PC-3 (cell line): ENCODE measurements at regions of chr2 and their contacts with region 1.

Region 1: GRCh38 chr2:227479865-227480475 is 8.0 kb downstream of the AGFG1 start:
- DNase-seq: peak; percentile 56
- ATAC-seq: peak; percentile 77
- H3K4me3 ChIP-seq: no peak overlapping the region
- H3K27ac ChIP-seq: no peak overlapping the region
- H3K4me1 ChIP-seq: peaks cover 47% of the 10 kb centered on the region
- H3K27me3 ChIP-seq: no peaks in the 10 kb centered on the region
- CTCF ChIP-seq: peak; percentile 57

Region 2: DNA sequence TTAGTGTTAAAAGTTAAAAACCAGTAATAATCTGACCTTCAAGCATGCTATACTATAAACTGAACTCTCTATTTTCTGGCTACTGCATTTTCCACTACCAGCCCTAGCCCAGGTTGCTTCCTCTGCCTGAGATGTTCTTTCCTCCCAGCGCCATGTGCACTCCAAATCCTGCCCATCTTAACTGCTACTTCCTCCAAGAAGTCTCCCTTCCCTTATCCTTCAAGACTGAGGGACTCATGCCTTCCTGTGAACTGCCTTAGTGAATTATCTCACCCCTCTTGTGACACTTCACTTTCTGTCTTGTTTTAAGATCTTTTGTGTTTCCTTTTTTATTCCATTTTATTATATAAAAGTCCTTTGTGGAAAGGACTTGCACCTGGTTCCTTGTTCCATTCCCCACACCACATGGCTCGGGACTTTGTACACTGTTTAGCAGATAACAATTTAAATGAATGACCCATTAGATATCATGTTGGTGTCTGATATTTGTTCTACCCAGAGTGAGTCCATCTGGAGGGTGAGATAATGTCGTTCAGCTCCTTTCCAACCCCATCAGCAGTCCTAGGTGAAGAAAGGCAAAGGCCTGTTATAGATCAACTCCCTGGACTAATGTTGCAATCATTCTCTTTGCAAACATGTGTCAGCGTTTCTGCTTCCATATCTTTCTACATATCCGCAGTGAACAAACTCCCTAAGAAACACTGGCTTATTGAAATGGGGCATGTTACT is 28.9 kb before region 1 on chr2:
- CTCF ChIA-PET with region 1: no interaction called
- POLR2A ChIA-PET with region 1: no interaction called
- intact Hi-C with region 1: no loop called
- DNase-seq: no peak
- ATAC-seq: no peak
- H3K4me3 ChIP-seq: no peak overlapping the region
- H3K27ac ChIP-seq: no peak overlapping the region
- H3K4me1 ChIP-seq: no peaks in the 10 kb centered on the region
- H3K27me3 ChIP-seq: no peaks in the 10 kb centered on the region
- CTCF ChIP-seq: no peak

Region 3: DNA sequence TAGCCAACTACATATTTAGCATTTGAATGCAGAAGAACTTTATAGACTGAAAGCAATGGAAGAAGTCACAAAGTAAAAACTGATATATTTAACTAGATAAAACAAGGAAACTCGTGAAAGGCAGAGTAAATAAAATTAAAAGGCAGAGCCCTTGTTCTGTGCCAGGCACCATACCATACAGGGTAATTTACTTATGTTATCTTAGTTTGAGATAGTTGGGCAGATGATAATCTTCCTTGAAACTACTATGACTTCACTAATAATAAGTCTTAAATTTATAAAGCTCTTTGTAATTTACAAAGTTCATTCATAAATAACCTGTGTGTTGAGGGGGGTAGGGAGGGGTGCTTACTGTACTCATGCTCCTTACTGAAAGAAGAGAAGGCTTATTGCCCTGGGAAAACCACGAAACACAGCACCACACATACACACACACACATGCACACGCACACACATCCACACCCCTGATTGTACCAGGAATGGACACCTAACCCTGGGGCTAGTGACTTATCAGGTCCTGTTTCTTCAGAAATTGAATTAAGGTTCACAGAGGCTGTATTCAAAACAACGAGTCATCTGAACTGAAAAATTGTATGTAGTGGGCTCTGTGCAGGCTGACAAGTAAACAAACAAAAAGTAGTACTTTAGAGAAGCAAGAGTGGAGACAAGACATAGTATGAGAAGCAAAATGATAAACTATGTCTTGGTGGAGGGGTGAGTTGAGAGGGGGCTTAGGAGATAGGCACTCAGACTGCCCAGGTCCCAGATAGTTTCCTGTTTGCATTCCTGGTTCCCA is 30.1 kb after region 1 on chr2:
- CTCF ChIA-PET with region 1: no interaction called
- POLR2A ChIA-PET with region 1: no interaction called
- intact Hi-C with region 1: no loop called
- DNase-seq: peak; percentile 76
- ATAC-seq: peak; percentile 74
- H3K4me3 ChIP-seq: no peak overlapping the region
- H3K27ac ChIP-seq: peak overlapping the region; percentile 20
- H3K4me1 ChIP-seq: peaks cover 32% of the 10 kb centered on the region
- H3K27me3 ChIP-seq: no peaks in the 10 kb centered on the region
- CTCF ChIP-seq: no peak

Region 4: DNA sequence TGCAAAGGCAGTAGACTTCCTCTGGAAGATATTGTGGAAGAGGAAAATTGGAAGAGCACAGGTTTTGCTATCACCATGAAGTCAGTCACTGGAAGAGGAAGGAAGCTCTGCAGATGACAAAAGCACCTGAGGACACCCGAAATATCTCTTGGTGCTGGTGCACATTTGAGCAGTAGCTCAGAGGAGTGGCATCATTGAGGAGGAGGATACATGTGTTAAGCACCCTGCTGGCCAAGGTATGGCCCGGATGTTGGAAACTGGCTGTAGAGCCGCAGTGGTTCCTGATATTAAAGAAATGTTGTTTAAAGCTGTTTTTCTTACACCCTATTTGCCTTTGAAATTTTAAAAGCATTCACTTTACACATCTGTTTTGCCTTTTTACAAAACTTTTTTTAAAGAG is 86.0 kb after region 1 on chr2:
- CTCF ChIA-PET with region 1: no interaction called
- POLR2A ChIA-PET with region 1: no interaction called
- intact Hi-C with region 1: loop called (anchors 5 kb)
- DNase-seq: no peak
- ATAC-seq: no peak
- H3K4me3 ChIP-seq: no peak overlapping the region
- H3K27ac ChIP-seq: no peak overlapping the region
- H3K4me1 ChIP-seq: no peaks in the 10 kb centered on the region
- H3K27me3 ChIP-seq: no peaks in the 10 kb centered on the region
- CTCF ChIP-seq: no peak

Region 5: GRCh38 chr2:227578651-227579050 is 98.7 kb after region 1 on chr2:
- CTCF ChIA-PET with region 1: no interaction called
- POLR2A ChIA-PET with region 1: no interaction called
- intact Hi-C with region 1: loop called (anchors 5 kb)
- DNase-seq: peak; percentile 14
- ATAC-seq: peak; percentile 65
- H3K4me3 ChIP-seq: no peak overlapping the region
- H3K27ac ChIP-seq: no peak overlapping the region
- H3K4me1 ChIP-seq: no peaks in the 10 kb centered on the region
- H3K27me3 ChIP-seq: no peaks in the 10 kb centered on the region
- CTCF ChIP-seq: peak; percentile 31

Region 6: DNA sequence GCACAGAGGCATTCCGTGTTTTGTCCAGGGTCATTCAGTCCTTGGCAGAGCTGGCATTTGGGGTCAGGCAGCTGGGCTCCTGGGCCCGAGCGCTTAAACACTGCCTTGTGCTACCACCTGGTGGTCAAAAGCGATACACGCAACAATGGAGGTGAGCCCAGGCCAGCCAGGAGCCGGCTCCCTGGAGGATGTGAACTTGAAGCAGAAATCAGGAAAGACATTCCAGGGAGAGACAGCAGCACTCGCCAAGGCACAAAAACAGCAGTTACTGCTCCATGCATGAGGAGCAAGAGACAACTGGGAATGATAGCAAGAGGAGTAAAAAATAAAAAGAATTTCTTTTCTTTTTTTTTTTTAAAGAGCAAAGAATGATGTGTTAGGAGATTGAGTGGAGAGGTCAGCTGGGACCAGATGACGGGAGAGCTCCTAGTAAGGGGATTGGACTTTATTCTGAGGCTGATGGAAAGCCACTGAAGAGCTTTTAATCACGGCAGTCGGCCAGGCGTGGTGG is 286.5 kb after region 1 on chr2:
- CTCF ChIA-PET with region 1: interaction called, 4 read pairs
- POLR2A ChIA-PET with region 1: interaction called, 3 read pairs
- intact Hi-C with region 1: loop called (anchors 5 kb)
- DNase-seq: peak; percentile 81
- ATAC-seq: peak; percentile 100
- H3K4me3 ChIP-seq: no peak overlapping the region
- H3K27ac ChIP-seq: no peak overlapping the region
- H3K4me1 ChIP-seq: no peaks in the 10 kb centered on the region
- H3K27me3 ChIP-seq: no peaks in the 10 kb centered on the region
- CTCF ChIP-seq: peak; percentile 91